Transverse colon (tissue), 4 donors: ENCODE measurements at regions of chr12 and their contacts with region 1.

Region 1: GRCh38 chr12:127562816-127563215 is 704.2 kb upstream of the TMEM132C start:
- DNase-seq: no peak
- H3K4me3 ChIP-seq: no peak overlapping the region
- H3K27ac ChIP-seq: no peak overlapping the region
- H3K4me1 ChIP-seq: no peaks in the 10 kb centered on the region
- H3K27me3 ChIP-seq: no peaks in the 10 kb centered on the region
- CTCF ChIP-seq: no peak
- EP300 ChIP-seq: no peak
- POLR2A ChIP-seq: no peak

Region 2: GRCh38 chr12:127509066-127509778 is 53.6 kb before region 1 on chr12:
- in situ Hi-C with region 1: no loop called
- intact Hi-C with region 1: loop called (anchors 2 kb)
- DNase-seq: no peak
- H3K4me3 ChIP-seq: no peak overlapping the region
- H3K27ac ChIP-seq: no peak overlapping the region
- H3K4me1 ChIP-seq: no peaks in the 10 kb centered on the region
- H3K27me3 ChIP-seq: no peaks in the 10 kb centered on the region
- CTCF ChIP-seq: no peak
- EP300 ChIP-seq: no peak
- POLR2A ChIP-seq: no peak

Region 3: DNA sequence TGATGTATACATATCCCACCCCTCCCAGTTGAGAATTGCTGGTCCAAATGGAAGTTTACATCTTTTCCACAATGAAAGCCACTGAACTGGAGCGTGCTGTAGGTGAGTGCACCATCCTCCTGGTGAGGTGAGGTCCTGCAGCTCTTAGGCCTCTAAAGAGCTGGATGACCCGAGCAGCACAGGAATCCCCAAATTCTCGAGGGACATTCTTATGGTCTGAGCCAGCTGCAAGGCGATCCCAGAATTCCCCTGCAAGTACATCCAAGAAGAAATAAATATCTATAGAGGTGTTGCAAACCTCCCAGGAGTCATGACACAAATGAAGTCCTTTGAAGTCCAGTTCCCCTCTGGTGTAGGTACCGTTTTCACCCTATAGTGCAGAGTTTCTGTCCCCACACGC is 728.1 kb after region 1 on chr12:
- in situ Hi-C with region 1: no loop called
- intact Hi-C with region 1: no loop called
- DNase-seq: no peak
- H3K4me3 ChIP-seq: no peak overlapping the region
- H3K27ac ChIP-seq: no peak overlapping the region
- H3K4me1 ChIP-seq: no peaks in the 10 kb centered on the region
- H3K27me3 ChIP-seq: no peaks in the 10 kb centered on the region
- CTCF ChIP-seq: no peak
- EP300 ChIP-seq: no peak
- POLR2A ChIP-seq: no peak